Breast epithelium (tissue), 4 donors: ENCODE measurements at regions of chr3 and their contacts with region 1.

Region 1: GRCh38 chr3:46979979-46980429 is 538 bp downstream of the NBEAL2 start:
- DNase-seq: no peak
- H3K4me3 ChIP-seq: peak overlapping the region; percentile 63 to 73 (median 71)
- H3K27ac ChIP-seq: peak overlapping the region; percentile 84 to 90
- H3K4me1 ChIP-seq: peaks cover 8 to 19% of the 10 kb centered on the region in 2 donors
- H3K27me3 ChIP-seq: no peaks in the 10 kb centered on the region
- CTCF ChIP-seq: no peak
- POLR2A ChIP-seq: no peak

Region 2: GRCh38 chr3:46882377-46883053 is 97.5 kb before region 1 on chr3:
- intact Hi-C with region 1: loop called (anchors 5 kb)
- DNase-seq: no peak
- H3K4me3 ChIP-seq: peak overlapping the region; percentile 50 to 73 (median 64)
- H3K27ac ChIP-seq: peak overlapping the region; percentile 55 to 92
- H3K4me1 ChIP-seq: peaks cover 0 to 2% of the 10 kb centered on the region in 2 donors
- H3K27me3 ChIP-seq: peaks cover 0 to 20% of the 10 kb centered on the region in 2 donors
- CTCF ChIP-seq: no peak
- POLR2A ChIP-seq: no peak

Region 3: DNA sequence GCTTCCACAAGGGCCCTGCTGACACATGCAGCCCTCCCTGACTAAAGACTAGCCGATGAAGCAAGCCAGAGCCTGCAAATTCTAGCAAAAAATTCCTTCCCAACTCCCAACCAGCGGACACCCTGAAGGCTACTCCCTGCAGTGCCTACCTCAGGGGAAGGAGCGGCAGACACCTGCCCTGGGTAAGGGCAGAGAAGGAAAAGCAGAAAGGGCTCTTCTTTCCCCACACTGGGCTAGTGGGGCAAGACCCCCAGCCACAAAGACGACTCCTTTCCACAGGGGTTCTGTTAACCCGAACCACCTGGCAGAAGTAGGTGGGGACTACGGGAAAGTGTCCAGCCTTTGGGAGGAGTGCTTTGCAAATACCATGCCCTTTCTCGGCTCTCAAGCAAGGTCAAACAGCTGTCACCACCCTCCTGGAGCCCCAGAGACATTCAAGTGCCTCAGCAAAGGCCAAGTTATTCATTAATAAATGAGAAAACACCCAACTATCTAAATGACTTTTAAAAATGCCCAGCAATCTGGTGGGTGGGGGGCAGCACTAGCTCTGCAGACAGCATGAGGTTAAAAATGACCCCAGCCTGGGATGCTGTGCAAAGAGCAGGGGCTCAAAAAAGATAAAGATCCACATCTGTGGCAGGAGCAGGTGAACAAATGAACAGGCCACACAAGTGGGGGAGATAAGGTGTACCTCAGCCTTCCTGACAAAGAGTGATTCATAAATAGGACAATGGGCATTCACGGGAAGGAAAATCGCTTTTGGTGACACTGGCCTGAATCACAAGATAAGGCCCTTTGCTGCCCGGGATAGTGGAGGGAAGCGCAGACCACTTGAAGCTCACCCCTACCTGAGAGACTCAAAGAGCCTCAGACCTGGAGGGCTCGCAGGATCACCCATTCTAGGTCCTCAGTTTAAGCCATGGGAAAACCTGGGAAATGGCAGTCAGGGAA is 36.5 kb before region 1 on chr3:
- intact Hi-C with region 1: loop called (anchors 1 kb)
- DNase-seq: no peak
- H3K4me3 ChIP-seq: no peak overlapping the region
- H3K27ac ChIP-seq: peak overlapping the region; percentile 56 to 64
- H3K4me1 ChIP-seq: peaks cover 0 to 23% of the 10 kb centered on the region in 2 donors
- H3K27me3 ChIP-seq: no peaks in the 10 kb centered on the region
- CTCF ChIP-seq: no peak
- POLR2A ChIP-seq: no peak